Heart left ventricle (tissue), 16 donors: ENCODE measurements at regions of chr3 and their contacts with region 1.

Region 1: GRCh38 chr3:29759411-29760225 is 478.7 kb downstream of the RBMS3 start:
- DNase-seq: peak in 2 of 5 donors; percentile 11 to 26
- ATAC-seq: peak; percentile 49 to 73 (median 58)
- H3K4me3 ChIP-seq: peak overlapping the region in 5 of 12 donors; percentile 1 to 14 (median 4)
- H3K27ac ChIP-seq: peak overlapping the region; percentile 25 to 84 (median 68)
- H3K4me1 ChIP-seq: peaks cover 0 to 77% (median 50%) of the 10 kb centered on the region in 12 donors
- H3K27me3 ChIP-seq: no peaks in the 10 kb centered on the region
- CTCF ChIP-seq: no peak
- POLR2A ChIP-seq: no peak

Region 2: GRCh38 chr3:29335438-29335837 is 424.2 kb before region 1 on chr3:
- intact Hi-C with region 1: loop called in 2 of 10 experiments (anchors 5 kb)
- DNase-seq: peak; percentile 65 to 89 (median 86)
- ATAC-seq: peak; percentile 95 to 98 (median 96)
- H3K4me3 ChIP-seq: peak overlapping the region in 10 of 12 donors; percentile 6 to 48 (median 35)
- H3K27ac ChIP-seq: peak overlapping the region; percentile 29 to 91 (median 76)
- H3K4me1 ChIP-seq: peaks cover 14 to 96% (median 52%) of the 10 kb centered on the region in 12 donors
- H3K27me3 ChIP-seq: no peaks in the 10 kb centered on the region
- CTCF ChIP-seq: no peak
- POLR2A ChIP-seq: no peak

Region 3: GRCh38 chr3:29642393-29643033 is 117.1 kb before region 1 on chr3:
- intact Hi-C with region 1: loop called in 1 of 10 experiments (anchors 5 kb)
- DNase-seq: peak in 4 of 5 donors; percentile 25 to 63 (median 32)
- ATAC-seq: peak; percentile 86 to 97 (median 94)
- H3K4me3 ChIP-seq: peak overlapping the region in 5 of 12 donors; percentile 5 to 26 (median 20)
- H3K27ac ChIP-seq: peak overlapping the region; percentile 37 to 92 (median 76)
- H3K4me1 ChIP-seq: peaks cover 0 to 69% (median 28%) of the 10 kb centered on the region in 12 donors
- H3K27me3 ChIP-seq: no peaks in the 10 kb centered on the region
- CTCF ChIP-seq: no peak
- POLR2A ChIP-seq: no peak

Region 4: DNA sequence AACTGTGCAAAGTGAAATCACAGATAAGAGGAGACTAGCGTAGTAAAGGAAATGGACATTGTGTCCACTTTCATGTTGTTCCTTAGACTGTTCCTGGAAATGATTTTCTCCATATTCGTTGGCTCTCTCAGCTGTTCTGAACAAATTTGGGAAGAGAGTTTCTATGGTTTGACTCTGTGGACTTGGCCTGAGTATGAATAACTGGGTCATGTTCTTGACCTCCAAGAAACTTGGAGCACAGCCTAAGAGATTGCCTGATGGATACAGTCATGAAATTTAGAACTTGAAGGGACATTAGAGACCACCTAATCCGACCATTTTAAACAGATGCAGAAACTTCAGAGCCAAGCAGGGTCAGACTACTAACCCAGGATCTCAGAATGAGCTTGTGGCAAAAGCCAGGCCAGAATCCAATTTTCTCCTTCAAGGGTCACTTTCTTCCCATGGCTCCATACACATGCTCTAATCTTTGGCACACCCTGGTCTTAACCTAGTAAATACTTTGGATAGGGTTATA is 48.3 kb before region 1 on chr3:
- intact Hi-C with region 1: loop called in 3 of 10 experiments (anchors 5 kb)
- DNase-seq: peak in 1 of 5 donors; percentile 27
- ATAC-seq: peak; percentile 65 to 86 (median 70)
- H3K4me3 ChIP-seq: no peak overlapping the region
- H3K27ac ChIP-seq: peak overlapping the region in 11 of 12 donors; percentile 2 to 72 (median 47)
- H3K4me1 ChIP-seq: peaks cover 0 to 58% (median 23%) of the 10 kb centered on the region in 12 donors
- H3K27me3 ChIP-seq: no peaks in the 10 kb centered on the region
- CTCF ChIP-seq: no peak
- POLR2A ChIP-seq: no peak

Region 5: GRCh38 chr3:29859726-29860270 is 100.2 kb after region 1 on chr3:
- intact Hi-C with region 1: no loop called
- DNase-seq: no peak
- ATAC-seq: no peak
- H3K4me3 ChIP-seq: no peak overlapping the region
- H3K27ac ChIP-seq: no peak overlapping the region
- H3K4me1 ChIP-seq: peaks cover 0 to 11% (median under 1%) of the 10 kb centered on the region in 12 donors
- H3K27me3 ChIP-seq: no peaks in the 10 kb centered on the region
- CTCF ChIP-seq: no peak
- POLR2A ChIP-seq: no peak